ENCODE measurements at regions of chr19 and their contacts with region 1.

Region 1: DNA sequence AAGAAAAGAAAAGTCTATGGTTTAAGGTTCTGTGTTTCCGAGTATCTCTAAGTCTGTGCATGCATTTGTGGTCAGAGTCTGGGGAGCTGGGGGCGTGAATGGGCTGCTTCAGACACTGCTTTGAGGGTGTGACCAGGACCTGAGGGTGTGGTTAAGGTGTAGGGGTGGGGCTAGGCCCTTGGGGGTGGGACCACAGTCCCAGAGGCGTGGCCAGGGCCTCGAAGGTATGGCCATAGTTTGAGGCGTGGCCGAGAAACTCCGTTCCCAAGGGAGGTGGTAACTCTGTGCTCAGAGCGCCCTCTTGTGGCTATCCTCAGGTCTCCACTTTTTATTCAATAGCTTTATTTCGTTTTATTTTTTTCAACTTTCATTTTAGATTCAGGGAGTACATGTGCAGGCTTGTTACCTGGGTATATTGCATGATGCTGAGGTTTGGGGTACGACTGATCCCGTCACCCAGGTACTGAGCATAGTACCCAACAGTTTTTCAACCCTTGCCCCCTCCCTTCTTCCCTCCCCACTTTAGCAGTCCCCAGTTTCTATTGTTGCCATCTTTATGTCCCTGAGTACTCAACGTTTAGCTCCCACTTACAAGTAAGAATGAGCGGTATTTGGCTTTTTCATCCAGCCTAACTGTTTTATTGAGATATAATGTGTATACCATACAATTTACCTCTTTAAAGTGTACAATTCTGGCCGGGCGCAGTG is 7.0 kb upstream of the CBLC start:
- DNase-seq: peak; percentile 99
- ATAC-seq: peak; percentile 100
- H3K4me3 Mint-ChIP-seq: peak overlapping the region; percentile 48
- H3K27ac Mint-ChIP-seq: peak overlapping the region; percentile 82
- H3K4me1 Mint-ChIP-seq: peaks cover 43% of the 10 kb centered on the region
- H3K27me3 Mint-ChIP-seq: peaks cover 11% of the 10 kb centered on the region

Region 2: GRCh38 chr19:44653977-44654774 is 116.5 kb before region 1 on chr19:
- CTCF ChIA-PET with region 1: interaction called, 18 read pairs
- DNase-seq: peak; percentile 81
- ATAC-seq: peak; percentile 83
- H3K4me3 Mint-ChIP-seq: no peak overlapping the region
- H3K27ac Mint-ChIP-seq: no peak overlapping the region
- H3K4me1 Mint-ChIP-seq: no peaks in the 10 kb centered on the region
- H3K27me3 Mint-ChIP-seq: no peaks in the 10 kb centered on the region

Region 3: GRCh38 chr19:44689056-44689895 is 81.4 kb before region 1 on chr19:
- CTCF ChIA-PET with region 1: interaction called, 117 read pairs
- DNase-seq: peak; percentile 79
- ATAC-seq: peak; percentile 53
- H3K4me3 Mint-ChIP-seq: no peak overlapping the region
- H3K27ac Mint-ChIP-seq: no peak overlapping the region
- H3K4me1 Mint-ChIP-seq: peaks cover 31% of the 10 kb centered on the region
- H3K27me3 Mint-ChIP-seq: peaks cover 49% of the 10 kb centered on the region

Region 4: GRCh38 chr19:44732615-44733014 is 38.1 kb before region 1 on chr19:
- CTCF ChIA-PET with region 1: interaction called, 59 read pairs
- DNase-seq: no peak
- ATAC-seq: no peak
- H3K4me3 Mint-ChIP-seq: no peak overlapping the region
- H3K27ac Mint-ChIP-seq: no peak overlapping the region
- H3K4me1 Mint-ChIP-seq: peaks cover 26% of the 10 kb centered on the region
- H3K27me3 Mint-ChIP-seq: no peaks in the 10 kb centered on the region

Region 5: GRCh38 chr19:44741841-44742352 is 28.8 kb before region 1 on chr19:
- CTCF ChIA-PET with region 1: interaction called, 32 read pairs
- DNase-seq: no peak
- ATAC-seq: no peak
- H3K4me3 Mint-ChIP-seq: no peak overlapping the region
- H3K27ac Mint-ChIP-seq: peak overlapping the region; percentile 19
- H3K4me1 Mint-ChIP-seq: peaks cover 33% of the 10 kb centered on the region
- H3K27me3 Mint-ChIP-seq: peaks cover 3% of the 10 kb centered on the region

Region 6: DNA sequence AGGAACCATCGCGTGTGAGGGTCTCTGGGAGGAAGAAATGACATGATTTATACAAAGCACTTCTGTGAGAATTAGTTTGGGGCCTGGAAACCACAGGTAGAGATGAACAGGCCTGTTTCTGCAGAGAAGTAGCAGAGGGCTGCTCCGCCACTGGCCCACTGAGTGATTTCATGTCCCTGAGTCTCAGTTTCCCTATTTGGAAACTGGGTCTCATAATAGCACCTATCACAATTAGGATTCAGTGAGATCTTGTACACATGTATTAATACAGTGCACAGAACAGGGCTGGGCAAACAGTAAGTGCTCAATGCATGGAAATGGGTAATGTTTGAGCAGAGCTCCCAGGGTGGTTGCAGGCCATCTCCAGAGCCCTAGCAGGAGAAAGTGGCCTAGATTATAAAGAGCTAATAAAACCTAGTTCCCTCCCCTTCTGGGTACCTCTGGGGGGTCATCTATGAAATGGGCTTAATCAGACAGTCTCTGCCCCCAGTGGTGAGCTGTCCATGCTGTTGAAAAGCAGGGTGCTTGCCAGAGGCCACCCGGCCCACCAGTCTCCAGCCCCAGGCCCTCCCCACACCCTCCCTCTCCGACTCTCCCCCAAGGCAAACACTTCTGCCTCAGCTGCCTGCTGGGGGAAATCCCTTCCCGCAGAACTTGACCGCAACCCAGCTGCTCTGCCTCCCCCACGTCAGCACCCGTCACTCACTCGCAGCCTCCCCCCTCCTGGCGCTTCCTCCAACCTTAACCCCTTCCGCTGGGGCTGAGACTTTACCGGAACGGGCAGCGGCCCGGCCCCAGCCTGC is 17.7 kb before region 1 on chr19:
- CTCF ChIA-PET with region 1: interaction called, 41 read pairs
- DNase-seq: peak; percentile 99
- ATAC-seq: peak; percentile 79
- H3K4me3 Mint-ChIP-seq: peak overlapping the region; percentile 88
- H3K27ac Mint-ChIP-seq: peak overlapping the region; percentile 94
- H3K4me1 Mint-ChIP-seq: peaks cover 67% of the 10 kb centered on the region
- H3K27me3 Mint-ChIP-seq: no peaks in the 10 kb centered on the region

Region 7: GRCh38 chr19:44782729-44783128 is 12.0 kb after region 1 on chr19:
- CTCF ChIA-PET with region 1: interaction called, 16 read pairs
- DNase-seq: no peak
- ATAC-seq: no peak
- H3K4me3 Mint-ChIP-seq: no peak overlapping the region
- H3K27ac Mint-ChIP-seq: no peak overlapping the region
- H3K4me1 Mint-ChIP-seq: peaks cover 4% of the 10 kb centered on the region
- H3K27me3 Mint-ChIP-seq: peaks cover 8% of the 10 kb centered on the region